Gastrocnemius medialis (tissue), 4 donors: ENCODE measurements at regions of chr2 and their contacts with region 1.

Region 1: DNA sequence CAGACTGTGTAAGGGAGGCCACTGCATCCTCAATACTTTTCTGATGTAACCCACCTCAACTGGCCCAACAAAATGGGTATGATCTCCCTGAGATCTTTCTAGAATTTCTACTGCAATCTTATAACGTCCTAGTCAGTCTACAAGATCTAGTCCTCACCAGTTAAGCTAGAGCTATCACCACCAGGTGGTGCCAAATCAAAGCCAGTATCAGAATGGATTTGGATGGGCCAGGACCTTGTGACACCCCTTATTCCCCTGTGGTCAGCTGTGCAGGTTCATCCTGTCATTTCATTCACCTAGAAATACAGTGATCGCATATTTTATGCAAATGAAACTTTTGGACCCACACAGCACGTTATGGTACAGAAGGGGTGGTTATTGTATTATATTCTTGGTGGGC is 90.3 kb downstream of the OLA1 start:
- DNase-seq: no peak
- ATAC-seq: peak in 1 of 2 donors; percentile 56
- H3K4me3 ChIP-seq: no peak overlapping the region
- H3K27ac ChIP-seq: no peak overlapping the region
- H3K4me1 ChIP-seq: no peaks in the 10 kb centered on the region
- H3K27me3 ChIP-seq: no peaks in the 10 kb centered on the region
- CTCF ChIP-seq: peak; percentile 15 to 51 (median 34)
- POLR2A ChIP-seq: no peak

Region 2: GRCh38 chr2:174072069-174072468 is 85.9 kb before region 1 on chr2:
- in situ Hi-C with region 1: no loop called
- intact Hi-C with region 1: no loop called
- DNase-seq: no peak
- ATAC-seq: no peak
- H3K4me3 ChIP-seq: no peak overlapping the region
- H3K27ac ChIP-seq: no peak overlapping the region
- H3K4me1 ChIP-seq: no peaks in the 10 kb centered on the region
- H3K27me3 ChIP-seq: no peaks in the 10 kb centered on the region
- CTCF ChIP-seq: no peak
- POLR2A ChIP-seq: no peak

Region 3: DNA sequence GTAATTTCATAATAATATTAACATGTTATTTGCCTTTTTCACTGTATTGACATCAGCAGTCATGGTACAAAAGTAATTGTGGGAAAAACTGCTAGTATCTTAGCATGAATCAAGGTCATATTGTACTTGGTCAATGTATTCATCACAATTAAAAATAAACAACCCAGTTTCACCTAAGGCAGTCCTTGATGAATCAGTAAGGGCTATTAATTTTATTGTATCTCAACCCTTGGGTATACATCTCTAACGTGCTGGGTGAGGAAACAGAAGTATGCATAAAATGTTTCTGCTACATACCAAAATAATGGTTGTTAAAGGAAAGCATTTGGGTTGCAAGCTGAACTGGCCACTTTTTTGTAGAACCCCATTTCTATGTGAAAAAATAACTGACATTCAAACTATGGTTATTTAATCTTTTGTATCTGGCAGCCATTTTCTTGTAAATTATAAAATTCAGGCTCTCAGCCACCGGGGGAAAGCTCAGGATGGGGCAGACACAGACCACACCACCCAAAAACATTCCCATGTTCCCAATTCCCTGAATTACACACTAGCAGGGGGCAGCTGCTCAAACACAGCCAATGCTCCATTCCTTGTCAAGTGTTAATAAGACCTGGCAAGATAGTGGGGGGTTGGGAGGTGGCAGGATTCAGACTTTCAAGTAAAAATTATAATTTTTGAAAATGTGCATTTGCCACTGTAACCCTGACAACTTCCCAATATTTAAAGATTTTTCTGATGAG is 41.0 kb after region 1 on chr2:
- in situ Hi-C with region 1: no loop called
- intact Hi-C with region 1: loop called (anchors 1 kb)
- DNase-seq: no peak
- ATAC-seq: no peak
- H3K4me3 ChIP-seq: no peak overlapping the region
- H3K27ac ChIP-seq: no peak overlapping the region
- H3K4me1 ChIP-seq: peaks cover 0 to 11% of the 10 kb centered on the region in 2 donors
- H3K27me3 ChIP-seq: no peaks in the 10 kb centered on the region
- CTCF ChIP-seq: no peak
- POLR2A ChIP-seq: no peak

Region 4: DNA sequence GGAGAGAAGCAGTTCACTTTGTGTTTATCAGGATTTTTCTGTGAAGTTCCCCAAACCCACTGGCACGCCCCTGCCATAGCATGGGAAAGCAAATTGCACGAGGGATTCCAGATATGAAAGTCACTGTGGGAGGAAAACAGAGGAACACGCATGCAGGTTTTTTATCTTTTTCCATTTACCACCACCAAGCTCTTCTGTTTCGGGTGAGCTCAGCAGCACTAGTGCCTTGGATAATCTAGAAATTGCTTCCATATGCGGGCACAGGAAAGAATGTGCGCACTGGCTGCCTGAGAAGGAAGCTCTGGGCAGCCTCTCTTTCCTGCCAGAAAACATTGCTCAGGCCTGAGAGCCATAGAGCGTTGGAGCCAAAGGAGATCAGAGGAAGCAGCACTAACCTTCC is 505.5 kb after region 1 on chr2:
- in situ Hi-C with region 1: no loop called
- intact Hi-C with region 1: no loop called
- DNase-seq: peak in 1 of 2 donors; percentile 14
- ATAC-seq: peak in 1 of 2 donors; percentile 26
- H3K4me3 ChIP-seq: no peak overlapping the region
- H3K27ac ChIP-seq: peak overlapping the region in 1 of 4 donors; percentile 46
- H3K4me1 ChIP-seq: peaks cover 0 to 4% of the 10 kb centered on the region in 2 donors
- H3K27me3 ChIP-seq: no peaks in the 10 kb centered on the region
- CTCF ChIP-seq: no peak
- POLR2A ChIP-seq: no peak